Activated T-helper 1 cell treated with anti-CD3 and anti-CD28 coated beads, Interleukin-12 subunit alpha, Interleukin-12 subunit beta, Interleukin-2, Interleukin-4 antibody, amounts not matched to agents 30 ng/mL and 10 ng/mL and 1 ng/mL, durations not matched to agents 14 hours and 24 hours and 36 hours (primary cell): ENCODE measurements at regions of chr19 and their contacts with region 1.

Region 1: GRCh38 chr19:32580901-32581703 is at the start of gene PDCD5:
- DNase-seq: peak; percentile 91
- H3K4me3 Mint-ChIP-seq: peak within 1 kb of the TSS; percentile 96
- H3K27ac Mint-ChIP-seq: peak within 1 kb of the TSS; percentile 86
- H3K4me1 Mint-ChIP-seq: peaks cover 33% of the 10 kb centered on the region
- H3K27me3 Mint-ChIP-seq: peaks cover 9% of the 10 kb centered on the region
- total RNA-seq, gene PDCD5: 203 TPM in 2 replicates

Region 2: DNA sequence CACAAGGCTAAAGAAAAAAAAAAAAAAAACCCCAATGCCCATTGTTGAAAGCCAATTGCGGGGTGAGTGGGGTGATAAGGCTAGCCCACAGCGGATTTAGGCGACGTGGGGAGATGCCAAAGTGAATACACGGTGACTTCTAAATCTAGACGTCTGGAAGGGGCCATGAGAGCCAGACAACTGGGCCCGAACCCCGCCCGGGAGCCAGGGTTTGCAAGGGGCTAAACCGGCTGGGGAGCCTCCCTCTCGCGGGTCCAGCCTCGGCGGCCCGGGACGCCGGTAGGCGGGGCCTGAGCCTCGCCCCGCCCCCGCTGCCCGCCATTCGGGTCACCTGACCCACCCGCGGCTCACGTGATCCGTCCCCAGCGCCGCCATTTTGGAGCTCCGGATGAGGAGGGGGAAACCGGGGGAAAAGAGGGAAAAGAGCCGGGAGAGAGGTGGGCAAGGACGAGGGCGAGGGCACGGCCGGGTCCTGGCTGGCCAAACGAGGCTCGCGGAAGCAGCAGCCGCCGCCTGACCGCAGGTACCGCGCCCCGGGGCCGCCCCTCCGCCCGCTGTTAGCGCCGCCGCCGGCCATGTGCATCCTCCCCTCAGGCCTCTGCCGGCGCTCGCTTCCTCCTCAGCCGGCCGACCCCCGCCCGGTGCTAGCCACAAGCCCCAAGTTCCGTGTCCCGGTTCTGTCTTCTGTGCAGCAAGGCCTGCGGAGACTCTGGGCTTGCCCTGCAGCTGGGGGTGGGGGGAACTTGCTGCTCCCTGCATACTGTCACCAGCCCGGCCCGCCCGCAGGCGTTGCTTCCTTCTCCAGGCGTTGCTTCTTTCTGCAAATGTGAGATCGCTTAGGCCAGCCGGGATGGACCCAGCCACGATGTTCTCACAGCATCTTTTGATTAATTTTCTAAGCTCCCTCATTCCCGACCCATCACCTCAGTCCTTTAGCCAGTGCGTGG is 235.6 kb before region 1 on chr19 and contains the start of gene ZNF507:
- intact Hi-C with region 1: loop called (anchors 2 kb)
- DNase-seq: peak; percentile 82
- H3K4me3 Mint-ChIP-seq: peak within 1 kb of the TSS; percentile 96
- H3K27ac Mint-ChIP-seq: peak within 1 kb of the TSS; percentile 96
- H3K4me1 Mint-ChIP-seq: peaks cover 40% of the 10 kb centered on the region
- H3K27me3 Mint-ChIP-seq: peaks cover 7% of the 10 kb centered on the region
- total RNA-seq, gene ZNF507: 32.4 and 34.8 TPM in 2 replicates

Region 3: GRCh38 chr19:32405431-32406161 is 175.5 kb before region 1 on chr19 and contains the start of gene DPY19L3:
- intact Hi-C with region 1: loop called (anchors 1 kb)
- DNase-seq: peak; percentile 89
- H3K4me3 Mint-ChIP-seq: peak within 1 kb of the TSS; percentile 90
- H3K27ac Mint-ChIP-seq: peak within 1 kb of the TSS; percentile 88
- H3K4me1 Mint-ChIP-seq: peaks cover 17% of the 10 kb centered on the region
- H3K27me3 Mint-ChIP-seq: peaks cover 5% of the 10 kb centered on the region
- total RNA-seq, gene DPY19L3: 11.9 and 16.5 TPM in 2 replicates

Region 4: GRCh38 chr19:32599736-32600157 is 18.6 kb after region 1 on chr19:
- intact Hi-C with region 1: loop called (anchors 2 kb)
- DNase-seq: peak; percentile 21
- H3K4me3 Mint-ChIP-seq: no peak overlapping the region
- H3K27ac Mint-ChIP-seq: no peak overlapping the region
- H3K4me1 Mint-ChIP-seq: peaks cover 8% of the 10 kb centered on the region
- H3K27me3 Mint-ChIP-seq: no peaks in the 10 kb centered on the region

Region 5: DNA sequence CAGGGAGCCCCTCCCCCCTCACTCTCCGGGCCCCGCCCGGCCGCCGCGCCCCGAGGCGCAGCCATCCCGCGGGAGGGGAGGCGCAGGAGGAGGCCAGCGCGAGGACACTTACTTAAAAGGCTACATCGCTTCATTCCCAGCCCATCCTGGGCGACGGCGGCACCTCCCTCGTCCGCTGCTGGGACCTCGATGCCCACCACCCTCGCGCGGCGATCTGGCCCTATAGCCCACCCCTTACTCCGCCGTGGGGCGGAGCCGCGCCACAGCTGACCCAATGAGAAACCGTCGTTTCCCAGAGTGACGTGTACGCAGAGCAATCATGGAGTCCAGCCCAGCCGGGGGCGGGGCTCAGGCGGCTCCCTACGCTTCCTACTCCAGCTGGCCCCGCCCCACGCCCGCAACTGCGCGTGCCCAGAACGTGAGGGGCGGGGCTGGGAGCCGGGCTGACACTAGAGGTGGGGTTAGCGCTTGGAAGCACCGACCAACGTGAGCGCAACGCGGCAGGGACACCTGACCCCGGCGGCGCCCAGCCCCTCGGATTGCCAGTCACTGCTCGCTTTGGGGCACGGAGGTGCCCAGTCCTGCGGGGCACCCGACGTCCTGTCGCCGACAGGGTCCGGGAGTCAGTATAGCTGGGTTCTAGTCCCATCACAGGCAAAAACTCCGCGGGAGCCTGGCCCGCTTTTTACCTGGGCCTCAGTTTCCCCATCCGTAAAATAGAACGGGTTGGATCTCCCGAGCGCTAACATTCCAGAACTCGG is 94.0 kb after region 1 on chr19 and contains the start of gene ANKRD27:
- intact Hi-C with region 1: loop called (anchors 2 kb)
- DNase-seq: peak; percentile 98
- H3K4me3 Mint-ChIP-seq: peak within 1 kb of the TSS; percentile 89
- H3K27ac Mint-ChIP-seq: peak within 1 kb of the TSS; percentile 89
- H3K4me1 Mint-ChIP-seq: peaks cover 28% of the 10 kb centered on the region
- H3K27me3 Mint-ChIP-seq: peaks cover 31% of the 10 kb centered on the region
- total RNA-seq, gene ANKRD27: 28.2 and 28.7 TPM in 2 replicates

Region 6: DNA sequence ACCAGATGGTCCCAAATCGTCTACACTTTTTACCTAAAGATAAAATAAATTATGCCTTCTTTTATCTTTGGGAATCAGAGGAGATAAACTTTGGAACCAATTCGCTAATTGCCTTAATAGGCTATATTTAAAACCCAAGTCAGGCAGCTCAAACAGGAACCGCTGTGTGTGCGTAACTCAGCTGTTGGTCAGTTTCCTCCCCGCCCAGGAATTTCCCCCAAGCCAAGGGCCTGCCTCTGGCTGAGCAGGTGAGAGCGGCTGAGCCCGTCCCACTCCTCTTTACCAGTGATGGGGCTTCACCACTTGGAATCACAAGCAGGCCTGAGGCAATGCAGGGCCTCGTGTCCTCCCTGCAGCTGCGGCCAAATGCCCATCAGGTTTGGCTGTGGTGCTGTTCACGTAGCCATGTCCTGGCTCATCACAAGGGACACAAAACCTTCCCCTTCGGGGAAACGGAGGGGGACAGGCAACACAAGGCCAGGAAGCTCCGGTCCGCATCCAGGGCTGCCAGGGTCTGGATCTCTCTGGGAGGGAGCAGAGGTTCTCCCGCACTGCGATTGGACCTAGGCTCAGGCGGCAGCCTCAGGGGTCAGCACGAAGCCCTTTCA is 289.0 kb after region 1 on chr19:
- intact Hi-C with region 1: no loop called
- DNase-seq: no peak
- H3K4me3 Mint-ChIP-seq: no peak overlapping the region
- H3K27ac Mint-ChIP-seq: no peak overlapping the region
- H3K4me1 Mint-ChIP-seq: no peaks in the 10 kb centered on the region
- H3K27me3 Mint-ChIP-seq: no peaks in the 10 kb centered on the region

Region 7: DNA sequence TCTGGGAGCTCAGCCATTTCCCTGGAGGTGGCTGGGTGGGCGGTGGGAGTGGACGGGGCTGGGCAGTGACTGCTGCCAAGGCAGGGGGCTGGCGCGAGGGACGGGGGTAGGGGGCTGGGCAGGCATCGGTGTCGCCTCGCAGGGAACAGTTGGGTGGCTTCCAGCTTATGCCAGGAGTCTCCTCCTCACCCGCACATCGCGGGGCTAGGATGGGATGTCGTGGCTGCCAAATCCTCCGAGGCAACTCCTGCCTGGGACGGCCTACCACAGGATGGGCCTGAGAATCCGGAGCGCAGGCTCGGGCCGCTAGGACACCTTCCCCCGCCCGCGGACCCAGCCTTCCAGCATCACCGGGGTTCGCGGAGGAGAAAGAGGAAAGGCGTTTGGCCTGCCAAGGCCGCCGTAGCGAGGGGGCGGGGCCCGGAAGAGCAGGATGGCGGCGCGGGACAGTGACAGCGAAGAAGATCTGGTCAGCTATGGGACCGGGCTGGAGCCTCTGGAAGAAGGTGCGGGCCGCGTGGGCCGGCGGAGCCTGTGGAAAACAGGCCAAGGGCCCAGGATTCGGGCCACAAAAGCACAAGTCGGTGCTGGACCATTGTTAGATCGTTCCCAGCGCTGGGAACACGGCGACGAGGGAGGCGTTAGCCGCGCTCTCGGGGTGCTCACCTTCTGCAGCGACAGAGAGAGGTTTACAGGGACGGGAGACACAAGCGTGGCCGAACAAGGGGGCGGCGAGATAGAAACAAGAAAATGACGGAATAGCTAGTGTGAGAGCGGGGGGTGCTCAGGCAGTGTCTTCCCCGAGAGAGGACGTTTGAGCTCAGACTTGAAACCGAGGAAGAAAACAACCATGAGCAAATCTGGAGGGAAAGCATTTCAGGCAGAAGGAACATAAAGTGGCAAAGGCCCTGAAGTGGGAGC is 499.9 kb after region 1 on chr19 and contains the start of gene GPATCH1:
- intact Hi-C with region 1: loop called (anchors 1 kb)
- DNase-seq: peak; percentile 85
- H3K4me3 Mint-ChIP-seq: peak within 1 kb of the TSS; percentile 98
- H3K27ac Mint-ChIP-seq: peak within 1 kb of the TSS; percentile 90
- H3K4me1 Mint-ChIP-seq: peaks cover 31% of the 10 kb centered on the region
- H3K27me3 Mint-ChIP-seq: no peaks in the 10 kb centered on the region
- total RNA-seq, gene GPATCH1: 11.1 and 13.5 TPM in 2 replicates

Region 8: GRCh38 chr19:33373701-33374421 is 792.8 kb after region 1 on chr19 and contains the start of gene CEBPG:
- intact Hi-C with region 1: loop called (anchors 5 kb)
- DNase-seq: peak; percentile 60
- H3K4me3 Mint-ChIP-seq: peak within 1 kb of the TSS; percentile 93
- H3K27ac Mint-ChIP-seq: peak within 1 kb of the TSS; percentile 69
- H3K4me1 Mint-ChIP-seq: peaks cover 39% of the 10 kb centered on the region
- H3K27me3 Mint-ChIP-seq: no peaks in the 10 kb centered on the region
- total RNA-seq, gene CEBPG: 30.4 and 31.3 TPM in 2 replicates